BJ (cell line): ENCODE measurements at regions of chr14 and their contacts with region 1.

Region 1: GRCh38 chr14:20546877-20547276 is 14.0 kb downstream of the RNASE9 start:
- DNase-seq: no peak
- H3K4me3 ChIP-seq: no peak overlapping the region
- H3K27me3 ChIP-seq: no peaks in the 10 kb centered on the region
- CTCF ChIP-seq: no peak

Region 2: DNA sequence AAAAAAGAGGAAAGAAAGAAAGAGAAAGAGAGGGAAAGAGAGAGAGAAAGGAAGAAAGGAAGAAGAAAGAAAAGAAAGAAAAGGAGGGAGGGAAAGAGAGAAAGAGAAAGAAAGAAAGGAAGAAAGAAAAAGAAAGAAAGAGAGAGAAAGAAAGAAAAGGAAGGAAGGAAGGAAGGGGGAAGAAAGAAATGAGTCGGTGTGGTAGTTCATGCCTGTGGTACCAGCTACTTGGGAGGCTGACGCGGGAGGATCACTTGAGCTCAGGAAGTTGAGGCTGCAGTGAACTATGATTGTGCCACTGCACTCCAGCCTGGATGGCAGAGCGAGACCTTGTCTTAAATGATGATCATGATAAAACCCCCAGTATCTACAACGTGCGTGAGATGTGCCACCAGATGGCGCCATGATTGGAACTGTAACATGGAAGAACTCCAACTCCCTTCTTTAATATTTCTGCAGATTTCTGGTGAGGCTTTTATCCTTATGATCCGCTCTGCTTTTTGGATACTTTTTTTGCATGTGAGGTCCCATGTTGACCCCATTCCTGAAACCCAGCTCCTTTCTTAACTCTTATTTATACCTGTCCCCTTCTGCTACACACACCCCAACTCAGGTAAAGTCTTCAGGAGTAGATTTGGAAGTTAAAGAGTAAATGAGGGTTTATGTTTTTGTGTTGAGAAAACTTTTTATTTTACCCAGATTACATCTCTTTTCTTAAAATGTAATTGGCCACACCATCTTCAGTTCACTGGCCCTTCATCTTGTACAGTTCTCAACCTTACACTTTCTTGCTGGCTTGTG is 15.9 kb before region 1 on chr14:
- CTCF ChIA-PET with region 1: interaction called, 10 read pairs
- POLR2A ChIA-PET with region 1: no interaction called
- DNase-seq: peak; percentile 6
- H3K4me3 ChIP-seq: no peak overlapping the region
- H3K27me3 ChIP-seq: no peaks in the 10 kb centered on the region
- CTCF ChIP-seq: peak; percentile 75

Region 3: DNA sequence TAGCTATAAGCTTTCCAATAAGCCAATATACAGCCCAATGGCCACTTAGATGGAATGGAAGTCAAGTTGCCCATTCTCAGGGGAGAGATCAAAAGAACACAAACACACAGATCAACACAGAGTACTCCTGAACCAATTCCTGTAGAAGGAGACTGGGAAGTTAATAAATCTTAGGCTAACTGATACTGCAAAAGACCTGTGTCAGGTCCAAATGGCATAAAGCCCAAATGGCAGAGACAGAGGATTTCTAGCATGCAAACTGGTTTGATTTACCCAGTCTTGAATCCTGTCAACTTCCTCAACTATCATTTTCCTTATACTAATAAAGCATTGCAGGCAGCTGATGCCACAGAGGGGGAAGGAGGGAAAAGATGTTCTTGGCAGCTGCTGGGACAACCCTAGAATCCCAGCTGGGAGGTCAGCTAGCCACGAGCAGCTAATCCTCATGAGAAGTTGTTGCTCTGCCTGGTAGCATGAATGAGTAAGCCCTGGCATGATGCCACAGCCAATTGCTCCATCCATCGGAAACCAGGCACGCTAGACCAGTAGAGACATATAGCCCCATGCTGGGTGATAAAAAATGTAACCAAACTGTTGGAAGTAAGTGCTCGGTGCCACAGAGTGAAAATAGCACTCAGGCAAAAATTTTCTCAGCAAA is 167.8 kb after region 1 on chr14:
- CTCF ChIA-PET with region 1: no interaction called
- POLR2A ChIA-PET with region 1: no interaction called
- DNase-seq: no peak
- H3K4me3 ChIP-seq: no peak overlapping the region
- H3K27me3 ChIP-seq: no peaks in the 10 kb centered on the region
- CTCF ChIP-seq: no peak